ENCODE measurements at regions of chr3 and their contacts with region 1.

Region 1: DNA sequence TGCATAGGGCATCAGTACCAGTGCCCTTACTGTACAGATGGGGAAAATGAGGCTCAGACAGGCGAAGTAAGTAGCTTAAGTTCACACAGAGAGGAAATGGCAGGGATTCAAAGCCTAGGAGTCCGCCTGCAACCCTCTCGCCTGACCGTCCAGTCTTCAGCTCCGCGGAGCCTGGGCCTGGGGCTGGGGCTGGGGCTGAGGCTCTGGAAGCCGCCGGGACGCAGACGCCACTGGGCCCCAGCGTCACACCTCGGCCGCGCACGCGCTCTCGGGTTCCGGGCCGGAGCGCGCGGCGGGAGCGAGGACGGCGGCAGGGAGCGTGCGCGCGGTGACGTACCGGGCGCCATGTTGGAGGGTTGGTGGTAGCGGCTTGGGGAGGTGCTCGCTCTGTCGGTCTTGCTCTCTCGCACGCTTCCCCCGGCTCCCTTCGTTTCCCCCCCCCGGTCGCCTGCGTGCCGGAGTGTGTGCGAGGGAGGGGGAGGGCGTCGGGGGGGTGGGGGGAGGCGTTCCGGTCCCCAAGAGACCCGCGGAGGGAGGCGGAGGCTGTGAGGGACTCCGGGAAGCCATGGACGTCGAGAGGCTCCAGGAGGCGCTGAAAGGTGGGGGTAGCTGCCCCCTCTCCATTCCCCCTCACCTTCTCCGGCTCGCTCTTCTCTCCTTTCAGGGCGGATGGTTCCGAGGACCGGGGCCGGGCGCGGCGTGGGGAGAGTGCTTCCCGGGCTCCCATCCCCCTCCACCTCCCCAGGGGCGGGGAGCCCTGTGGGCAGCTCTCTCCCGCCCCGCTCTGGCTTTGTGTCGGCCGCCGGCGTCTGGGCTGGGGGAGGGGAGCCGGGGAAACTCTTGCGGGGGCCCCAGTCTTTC is at the start of gene PPP4R2:
- DNase-seq: peak; percentile 98
- H3K4me3 Mint-ChIP-seq: peak within 1 kb of the TSS; percentile 89
- H3K27ac Mint-ChIP-seq: peak within 1 kb of the TSS; percentile 89
- H3K4me1 Mint-ChIP-seq: peaks cover 35% of the 10 kb centered on the region
- H3K27me3 Mint-ChIP-seq: no peaks in the 10 kb centered on the region
- total RNA-seq, gene PPP4R2: 105 and 107 TPM in 2 replicates

Region 2: GRCh38 chr3:72938471-72939265 is 58.0 kb before region 1 on chr3:
- intact Hi-C with region 1: loop called (anchors 1 kb)
- DNase-seq: peak; percentile 75
- H3K4me3 Mint-ChIP-seq: no peak overlapping the region
- H3K27ac Mint-ChIP-seq: no peak overlapping the region
- H3K4me1 Mint-ChIP-seq: no peaks in the 10 kb centered on the region
- H3K27me3 Mint-ChIP-seq: peaks cover 20% of the 10 kb centered on the region

Region 3: GRCh38 chr3:72960812-72961518 is 35.7 kb before region 1 on chr3:
- intact Hi-C with region 1: loop called (anchors 1 kb)
- DNase-seq: no peak
- H3K4me3 Mint-ChIP-seq: no peak overlapping the region
- H3K27ac Mint-ChIP-seq: no peak overlapping the region
- H3K4me1 Mint-ChIP-seq: peaks cover 34% of the 10 kb centered on the region
- H3K27me3 Mint-ChIP-seq: peaks cover 2% of the 10 kb centered on the region

Region 4: DNA sequence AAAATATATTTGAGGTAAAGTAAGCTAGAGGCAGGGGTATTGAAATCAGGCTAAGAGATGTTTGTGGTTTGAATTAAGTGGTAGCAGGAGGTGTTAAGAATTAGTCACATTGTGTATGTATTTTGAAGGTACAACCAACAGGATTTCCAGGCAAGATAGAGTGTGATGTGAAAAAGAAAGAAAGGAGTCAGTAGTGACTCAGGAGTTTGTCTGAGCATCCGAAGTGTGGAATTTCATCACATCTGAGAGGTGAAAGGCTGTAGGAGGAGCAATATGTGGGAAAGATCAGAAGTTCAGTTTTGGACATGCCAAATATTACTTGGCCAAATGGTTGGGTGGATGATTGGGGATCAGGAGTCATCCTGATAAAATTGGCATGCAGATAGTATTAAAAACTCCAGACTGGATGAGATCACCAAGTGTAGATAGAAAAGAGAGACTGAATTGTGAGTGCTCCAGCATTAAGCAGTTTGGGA is 32.7 kb after region 1 on chr3:
- intact Hi-C with region 1: loop called (anchors 1 kb)
- DNase-seq: no peak
- H3K4me3 Mint-ChIP-seq: peak overlapping the region; percentile 5
- H3K27ac Mint-ChIP-seq: peak overlapping the region; percentile 49
- H3K4me1 Mint-ChIP-seq: peaks cover 50% of the 10 kb centered on the region
- H3K27me3 Mint-ChIP-seq: no peaks in the 10 kb centered on the region

Region 5: GRCh38 chr3:73045391-73045790 is 48.7 kb after region 1 on chr3:
- intact Hi-C with region 1: no loop called
- DNase-seq: no peak
- H3K4me3 Mint-ChIP-seq: no peak overlapping the region
- H3K27ac Mint-ChIP-seq: no peak overlapping the region
- H3K4me1 Mint-ChIP-seq: peaks cover 28% of the 10 kb centered on the region
- H3K27me3 Mint-ChIP-seq: no peaks in the 10 kb centered on the region